ENCODE measurements at regions of chr17 and their contacts with region 1.

Region 1: DNA sequence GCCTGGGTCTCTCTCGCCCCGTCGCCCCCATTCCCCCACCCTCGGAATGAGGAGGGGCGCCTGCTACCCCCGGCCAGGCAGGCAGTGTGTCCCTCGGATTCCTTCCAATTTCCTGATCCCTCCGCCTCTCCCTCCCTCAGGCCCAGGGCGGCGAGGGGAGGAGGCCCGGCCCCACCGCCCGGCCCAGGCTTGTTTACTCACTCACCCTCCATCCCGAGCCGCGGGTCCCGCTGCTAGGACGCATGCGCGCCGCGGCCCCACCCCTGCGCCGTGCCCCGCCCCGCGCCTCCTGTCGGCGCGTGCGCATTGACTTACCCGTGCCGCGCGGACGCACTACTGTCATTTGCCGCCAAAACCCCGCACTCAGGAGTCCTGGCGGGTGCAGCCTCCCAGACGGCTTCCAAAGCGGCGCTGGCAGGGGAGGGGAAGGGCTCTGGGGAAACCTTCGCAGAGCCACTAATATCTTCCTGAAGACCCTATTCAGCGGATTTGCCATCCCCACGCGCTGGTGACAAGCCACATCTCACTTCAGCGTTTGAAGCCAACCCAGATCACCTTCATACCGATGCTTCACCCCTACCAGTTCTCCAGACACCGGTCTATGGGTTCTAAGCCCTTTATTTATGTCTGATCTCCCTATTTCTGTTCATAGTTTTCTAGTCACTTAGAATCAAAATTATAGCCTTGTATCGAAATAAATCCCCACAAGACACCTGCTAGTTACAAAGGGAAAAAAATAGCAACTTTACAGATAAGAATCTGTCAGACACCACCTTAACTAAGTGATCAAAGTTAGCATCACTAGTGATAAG is at the start of gene EZH1:
- DNase-seq: peak; percentile 88 to 96 (median 94)
- ATAC-seq: peak; percentile 97
- H3K4me3 ChIP-seq: peak within 1 kb of the TSS; percentile 78
- H3K4me3 Mint-ChIP-seq: peak within 1 kb of the TSS; percentile 83 to 99 (median 94)
- H3K27ac ChIP-seq: peak within 1 kb of the TSS; percentile 90
- H3K27ac Mint-ChIP-seq: peak within 1 kb of the TSS; percentile 86 to 97 (median 94)
- H3K4me1 ChIP-seq: peaks cover 12 to 16% of the 10 kb centered on the region in 2 donors
- H3K4me1 Mint-ChIP-seq: peaks cover 15 to 34% (median 22%) of the 10 kb centered on the region in 7 donors
- H3K27me3 ChIP-seq: no peaks in the 10 kb centered on the region
- H3K27me3 Mint-ChIP-seq: peaks cover 0 to 41% (median 11%) of the 10 kb centered on the region in 5 donors
- total RNA-seq, gene EZH1: 50.9 to 212 (median 95.4) TPM

Region 2: GRCh38 chr17:41548844-41549595 is 1196.0 kb before region 1 on chr17:
- CTCF ChIA-PET with region 1: no interaction called
- POLR2A ChIA-PET with region 1: no interaction called
- intact Hi-C with region 1: no loop called
- DNase-seq: peak; percentile 72 to 87 (median 82)
- ATAC-seq: peak; percentile 94
- H3K4me3 ChIP-seq: peak overlapping the region; percentile 43
- H3K4me3 Mint-ChIP-seq: peak overlapping the region; percentile 48 to 77 (median 68)
- H3K27ac ChIP-seq: peak overlapping the region; percentile 37
- H3K27ac Mint-ChIP-seq: peak overlapping the region; percentile 13 to 85 (median 73)
- H3K4me1 ChIP-seq: peaks cover 10 to 17% of the 10 kb centered on the region in 2 donors
- H3K4me1 Mint-ChIP-seq: peaks cover 8 to 18% (median 14%) of the 10 kb centered on the region in 7 donors
- H3K27me3 ChIP-seq: no peaks in the 10 kb centered on the region
- H3K27me3 Mint-ChIP-seq: peaks cover 0 to 13% (median 8%) of the 10 kb centered on the region in 5 donors

Region 3: GRCh38 chr17:42720996-42721583 is 23.9 kb before region 1 on chr17:
- CTCF ChIA-PET with region 1: no interaction called
- POLR2A ChIA-PET with region 1: no interaction called
- intact Hi-C with region 1: loop called in 1 of 2 experiments (anchors 1 kb)
- DNase-seq: peak in 7 of 9 donors; percentile 43 to 74 (median 62)
- ATAC-seq: peak; percentile 87
- H3K4me3 ChIP-seq: no peak overlapping the region
- H3K4me3 Mint-ChIP-seq: no peak overlapping the region
- H3K27ac ChIP-seq: no peak overlapping the region
- H3K27ac Mint-ChIP-seq: no peak overlapping the region
- H3K4me1 ChIP-seq: no peaks in the 10 kb centered on the region
- H3K4me1 Mint-ChIP-seq: peaks cover 0 to 5% (median 4%) of the 10 kb centered on the region in 7 donors
- H3K27me3 ChIP-seq: no peaks in the 10 kb centered on the region
- H3K27me3 Mint-ChIP-seq: no peaks in the 10 kb centered on the region

Region 4: GRCh38 chr17:42760652-42761581 is 15.9 kb after region 1 on chr17 and contains the start of gene RAMP2:
- CTCF ChIA-PET with region 1: interaction called, 4 read pairs
- POLR2A ChIA-PET with region 1: interaction called, 3 read pairs
- intact Hi-C with region 1: loop called in 1 of 2 experiments (anchors 2 kb)
- DNase-seq: peak in 1 of 9 donors; percentile 38
- ATAC-seq: peak; percentile 39
- H3K4me3 ChIP-seq: no peak within 1 kb of the TSS
- H3K4me3 Mint-ChIP-seq: peak within 1 kb of the TSS; percentile 21 to 73 (median 56)
- H3K27ac ChIP-seq: no peak within 1 kb of the TSS
- H3K27ac Mint-ChIP-seq: peak within 1 kb of the TSS in 1 of 9 donors; percentile 43
- H3K4me1 ChIP-seq: peaks cover 0 to 10% of the 10 kb centered on the region in 2 donors
- H3K4me1 Mint-ChIP-seq: peaks cover 0 to 13% (median 7%) of the 10 kb centered on the region in 7 donors
- H3K27me3 ChIP-seq: peaks cover 3 to 12% of the 10 kb centered on the region in 2 donors
- H3K27me3 Mint-ChIP-seq: peaks cover 59 to 69% (median 64%) of the 10 kb centered on the region in 5 donors
- total RNA-seq, gene RAMP2: not detected